Activated CD4-positive, alpha-beta memory T cell treated with anti-CD3 and anti-CD28 coated beads for 36 hours (primary cell): ENCODE measurements at regions of chr3 and their contacts with region 1.

Region 1: GRCh38 chr3:119873646-119874045 is 91.7 kb downstream of the NR1I2 start:
- DNase-seq: no peak
- H3K4me3 Mint-ChIP-seq: no peak overlapping the region
- H3K27ac Mint-ChIP-seq: no peak overlapping the region
- H3K4me1 Mint-ChIP-seq: peaks cover 9% of the 10 kb centered on the region
- H3K27me3 Mint-ChIP-seq: no peaks in the 10 kb centered on the region

Region 2: GRCh38 chr3:119841803-119842477 is 31.7 kb before region 1 on chr3:
- CTCF ChIA-PET with region 1: no interaction called
- POLR2A ChIA-PET with region 1: no interaction called
- intact Hi-C with region 1: loop called (anchors 1 kb)
- DNase-seq: no peak
- H3K4me3 Mint-ChIP-seq: no peak overlapping the region
- H3K27ac Mint-ChIP-seq: no peak overlapping the region
- H3K4me1 Mint-ChIP-seq: peaks cover 3% of the 10 kb centered on the region
- H3K27me3 Mint-ChIP-seq: no peaks in the 10 kb centered on the region

Region 3: DNA sequence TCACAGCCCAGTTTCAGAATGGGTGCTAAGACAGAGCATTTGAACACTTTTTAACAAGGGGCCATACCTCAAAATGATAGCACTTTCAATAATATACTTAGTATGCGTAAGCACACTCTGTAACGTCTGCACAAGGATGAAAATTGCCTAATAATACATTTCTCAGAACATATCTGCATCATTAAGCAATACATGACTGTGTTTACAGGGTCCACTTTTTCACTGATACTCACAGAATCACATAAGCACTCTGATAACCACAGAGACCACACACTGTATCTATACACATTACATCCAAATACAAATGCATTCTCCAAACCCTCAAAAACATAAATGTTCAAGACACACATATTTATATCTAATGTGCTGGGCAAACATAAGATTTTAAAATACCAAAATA is 12.0 kb before region 1 on chr3:
- CTCF ChIA-PET with region 1: no interaction called
- POLR2A ChIA-PET with region 1: no interaction called
- intact Hi-C with region 1: no loop called
- DNase-seq: no peak
- H3K4me3 Mint-ChIP-seq: no peak overlapping the region
- H3K27ac Mint-ChIP-seq: no peak overlapping the region
- H3K4me1 Mint-ChIP-seq: peaks cover 6% of the 10 kb centered on the region
- H3K27me3 Mint-ChIP-seq: no peaks in the 10 kb centered on the region